ENCODE measurements at regions of chr13 and their contacts with region 1.

Region 1: GRCh38 chr13:92260363-92260762 is 861.9 kb downstream of the GPC5 start:
- DNase-seq: no peak
- ATAC-seq: no peak
- H3K4me3 ChIP-seq: no peak overlapping the region
- H3K27ac ChIP-seq: no peak overlapping the region
- H3K4me1 ChIP-seq: no peaks in the 10 kb centered on the region
- H3K27me3 ChIP-seq: no peaks in the 10 kb centered on the region
- CTCF ChIP-seq: no peak
- EP300 ChIP-seq: no peak
- POLR2A ChIP-seq: no peak
- RAD21 ChIP-seq: no peak

Region 2: DNA sequence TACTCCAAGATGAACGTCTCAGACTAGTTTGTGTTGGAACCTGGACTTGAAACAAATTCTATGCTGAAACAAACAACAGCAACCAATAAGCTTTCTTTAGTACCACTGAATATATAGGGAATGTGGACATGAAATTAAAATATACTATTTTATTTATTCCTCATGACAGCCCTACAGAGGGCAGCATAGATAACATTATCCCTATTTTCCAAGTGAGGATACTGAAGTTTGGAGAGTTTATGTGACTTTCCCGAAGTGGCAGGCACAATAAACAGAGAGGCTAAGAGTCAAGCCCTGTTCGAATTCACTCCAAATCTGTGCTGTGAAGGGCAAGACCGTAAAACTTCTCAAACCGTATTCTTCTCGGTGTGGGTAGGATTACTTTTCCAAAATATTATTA is 456.4 kb after region 1 on chr13:
- CTCF ChIA-PET with region 1: no interaction called
- POLR2A ChIA-PET with region 1: no interaction called
- in situ Hi-C with region 1: loop called (anchors 25 kb)
- intact Hi-C with region 1: no loop called
- DNase-seq: no peak
- ATAC-seq: no peak
- H3K4me3 ChIP-seq: no peak overlapping the region
- H3K27ac ChIP-seq: no peak overlapping the region
- H3K4me1 ChIP-seq: no peaks in the 10 kb centered on the region
- H3K27me3 ChIP-seq: no peaks in the 10 kb centered on the region
- CTCF ChIP-seq: no peak
- EP300 ChIP-seq: no peak
- POLR2A ChIP-seq: no peak
- RAD21 ChIP-seq: no peak

Measured in K562 (cell line).